HepG2 (cell line): ENCODE measurements at regions of chr19 and their contacts with region 1.

Region 1: DNA sequence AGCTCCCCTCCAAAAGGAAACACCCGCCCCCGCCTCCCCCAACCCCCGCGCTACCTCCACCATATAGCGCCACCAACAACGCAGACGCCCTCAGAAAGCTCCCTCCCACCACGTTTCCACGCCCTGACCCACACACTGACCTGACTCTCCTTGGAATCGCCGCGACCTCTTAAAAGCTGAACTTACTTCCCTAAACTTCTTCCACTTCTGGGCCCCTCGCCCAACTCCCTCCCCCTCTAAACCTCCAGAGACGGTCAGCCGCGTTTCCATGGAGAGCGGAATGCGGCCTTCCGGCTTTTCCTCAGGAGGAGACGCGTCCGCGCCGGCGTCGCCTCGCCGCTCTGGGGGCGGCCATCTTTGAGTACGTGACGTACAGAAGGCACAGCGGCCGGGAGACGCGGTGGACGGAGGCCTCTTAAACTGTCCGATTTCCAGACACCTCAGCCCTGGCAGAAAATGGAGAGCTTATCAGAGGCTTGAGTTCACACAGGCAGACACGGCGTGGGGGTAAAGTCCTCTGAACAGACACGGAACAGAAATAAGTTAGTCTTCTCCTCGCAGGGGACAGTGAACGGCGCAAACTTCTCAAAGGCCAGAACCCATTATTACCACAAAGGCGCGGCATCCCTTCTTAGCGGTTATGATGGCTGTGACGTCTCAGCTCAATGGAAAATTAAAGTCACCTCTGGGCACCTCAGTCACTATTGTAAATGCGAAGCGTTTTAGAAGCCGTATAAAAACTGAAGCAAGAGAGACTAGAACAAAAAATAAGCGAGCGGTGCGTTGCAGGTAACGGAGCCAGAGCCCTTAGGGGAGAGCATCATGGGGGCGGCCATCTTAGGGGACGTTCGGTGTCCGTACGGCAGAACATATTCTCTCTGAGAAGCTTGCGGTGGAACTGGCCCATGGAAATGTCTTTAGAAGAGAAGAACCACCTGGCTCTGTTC is at the start of gene ZNF432:
- DNase-seq: peak; percentile 79
- ATAC-seq: peak; percentile 96
- H3K4me3 ChIP-seq: peak within 1 kb of the TSS; percentile 66 to 90 (median 87)
- H3K27ac ChIP-seq: peak within 1 kb of the TSS; percentile 94
- H3K4me1 ChIP-seq: peaks cover 27% of the 10 kb centered on the region
- H3K27me3 ChIP-seq: no peaks in the 10 kb centered on the region; a peak in 1 of 5 replicates
- CTCF ChIP-seq: peak; percentile 27; the same call in 1 of the 2 replicates
- EP300 ChIP-seq: no peak
- POLR2A ChIP-seq: peak; percentile 33 to 59; a peak in 1 of 4 replicates
- RAD21 ChIP-seq: no peak
- total RNA-seq, gene ZNF432: 8.7 and 10.8 TPM in 2 replicates

Region 2: GRCh38 chr19:51887522-51888498 is 161.0 kb before region 1 on chr19 and contains the start of gene ZNF577:
- CTCF ChIA-PET with region 1: no interaction called
- POLR2A ChIA-PET with region 1: no interaction called
- in situ Hi-C with region 1: no loop called
- intact Hi-C with region 1: no loop called
- DNase-seq: no peak
- ATAC-seq: no peak
- H3K4me3 ChIP-seq: no peak within 1 kb of the TSS
- H3K27ac ChIP-seq: no peak within 1 kb of the TSS
- H3K4me1 ChIP-seq: no peaks in the 10 kb centered on the region
- H3K27me3 ChIP-seq: no peaks in the 10 kb centered on the region
- CTCF ChIP-seq: no peak
- EP300 ChIP-seq: no peak
- POLR2A ChIP-seq: no peak
- RAD21 ChIP-seq: no peak
- total RNA-seq, gene ZNF577: 3.2 and 5.7 TPM in 2 replicates

Region 3: GRCh38 chr19:51916167-51916566 is 132.7 kb before region 1 on chr19:
- CTCF ChIA-PET with region 1: no interaction called
- POLR2A ChIA-PET with region 1: no interaction called
- in situ Hi-C with region 1: no loop called
- intact Hi-C with region 1: no loop called
- DNase-seq: no peak
- ATAC-seq: no peak
- H3K4me3 ChIP-seq: no peak overlapping the region
- H3K27ac ChIP-seq: no peak overlapping the region
- H3K4me1 ChIP-seq: no peaks in the 10 kb centered on the region
- H3K27me3 ChIP-seq: no peaks in the 10 kb centered on the region
- CTCF ChIP-seq: no peak
- EP300 ChIP-seq: no peak
- POLR2A ChIP-seq: no peak
- RAD21 ChIP-seq: no peak

Region 4: DNA sequence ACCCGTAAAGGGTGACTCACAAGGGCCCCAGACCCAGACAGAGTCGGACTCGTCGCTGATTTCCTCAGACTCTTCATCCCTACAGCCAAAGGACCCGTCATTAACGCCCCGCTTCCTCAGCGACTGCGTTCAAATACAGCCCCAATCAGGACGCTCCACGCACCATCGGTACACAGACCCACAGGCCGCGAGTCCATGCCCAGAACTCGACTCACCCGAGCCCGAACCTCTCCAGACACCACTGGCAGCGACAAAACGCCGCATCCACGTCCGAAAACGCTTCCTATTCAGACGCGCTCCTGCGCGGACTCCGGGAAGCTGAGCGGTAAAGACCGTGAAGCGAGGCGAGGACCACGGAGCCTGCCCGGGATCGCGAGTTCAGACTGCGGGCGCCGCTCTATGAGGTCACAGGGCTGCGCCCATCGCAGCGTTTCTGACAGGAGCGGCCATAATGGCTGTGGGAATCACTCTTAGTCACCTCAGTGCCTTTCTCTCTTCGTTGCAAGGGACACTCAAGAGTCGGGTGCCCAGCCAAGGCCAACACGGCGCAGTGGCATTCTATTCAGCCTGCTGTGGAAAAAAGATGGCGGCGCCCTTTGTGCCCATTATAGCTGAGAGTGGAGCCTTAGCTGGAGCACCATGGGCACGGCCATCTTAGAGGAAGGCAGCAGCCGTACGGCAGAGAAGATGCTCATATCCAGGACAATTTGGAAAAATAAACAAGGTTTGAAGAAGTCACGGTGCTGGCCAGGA is 20.6 kb before region 1 on chr19 and contains the start of gene ZNF614:
- CTCF ChIA-PET with region 1: no interaction called
- POLR2A ChIA-PET with region 1: interaction called, 10 read pairs
- in situ Hi-C with region 1: no loop called
- intact Hi-C with region 1: loop called (anchors 2 kb)
- DNase-seq: peak; percentile 71
- ATAC-seq: peak; percentile 93
- H3K4me3 ChIP-seq: peak within 1 kb of the TSS; percentile 89 to 100 (median 95)
- H3K27ac ChIP-seq: peak within 1 kb of the TSS; percentile 97
- H3K4me1 ChIP-seq: peaks cover 49% of the 10 kb centered on the region
- H3K27me3 ChIP-seq: no peaks in the 10 kb centered on the region; a peak in 2 of 5 replicates
- CTCF ChIP-seq: no peak
- EP300 ChIP-seq: peak in 1 of 2 experiments; percentile 48; a peak in 1 of 4 replicates
- POLR2A ChIP-seq: peak; percentile 84 to 93
- RAD21 ChIP-seq: peak; percentile 57; the same call in 1 of the 2 replicates
- total RNA-seq, gene ZNF614: 22.8 and 38.2 TPM in 2 replicates

Region 5: GRCh38 chr19:52095172-52096014 is 46.6 kb after region 1 on chr19 and contains the start of gene ZNF841:
- CTCF ChIA-PET with region 1: no interaction called
- POLR2A ChIA-PET with region 1: no interaction called
- in situ Hi-C with region 1: no loop called
- intact Hi-C with region 1: loop called (anchors 10 kb)
- DNase-seq: peak; percentile 87
- ATAC-seq: peak; percentile 97
- H3K4me3 ChIP-seq: peak within 1 kb of the TSS; percentile 86 to 98 (median 90)
- H3K27ac ChIP-seq: peak within 1 kb of the TSS; percentile 81
- H3K4me1 ChIP-seq: peaks cover 38% of the 10 kb centered on the region; the same call in 1 of the 2 replicates
- H3K27me3 ChIP-seq: peaks cover 0 to 3% of the 10 kb centered on the region in 2 experiments; a peak in 1 of 5 replicates
- CTCF ChIP-seq: no peak
- EP300 ChIP-seq: no peak
- POLR2A ChIP-seq: peak; percentile 81 to 88
- RAD21 ChIP-seq: no peak
- total RNA-seq, gene ZNF841: 14.2 and 15.9 TPM in 2 replicates